AG04450 (cell line): ENCODE measurements at regions of chr6 and their contacts with region 1.

Region 1: DNA sequence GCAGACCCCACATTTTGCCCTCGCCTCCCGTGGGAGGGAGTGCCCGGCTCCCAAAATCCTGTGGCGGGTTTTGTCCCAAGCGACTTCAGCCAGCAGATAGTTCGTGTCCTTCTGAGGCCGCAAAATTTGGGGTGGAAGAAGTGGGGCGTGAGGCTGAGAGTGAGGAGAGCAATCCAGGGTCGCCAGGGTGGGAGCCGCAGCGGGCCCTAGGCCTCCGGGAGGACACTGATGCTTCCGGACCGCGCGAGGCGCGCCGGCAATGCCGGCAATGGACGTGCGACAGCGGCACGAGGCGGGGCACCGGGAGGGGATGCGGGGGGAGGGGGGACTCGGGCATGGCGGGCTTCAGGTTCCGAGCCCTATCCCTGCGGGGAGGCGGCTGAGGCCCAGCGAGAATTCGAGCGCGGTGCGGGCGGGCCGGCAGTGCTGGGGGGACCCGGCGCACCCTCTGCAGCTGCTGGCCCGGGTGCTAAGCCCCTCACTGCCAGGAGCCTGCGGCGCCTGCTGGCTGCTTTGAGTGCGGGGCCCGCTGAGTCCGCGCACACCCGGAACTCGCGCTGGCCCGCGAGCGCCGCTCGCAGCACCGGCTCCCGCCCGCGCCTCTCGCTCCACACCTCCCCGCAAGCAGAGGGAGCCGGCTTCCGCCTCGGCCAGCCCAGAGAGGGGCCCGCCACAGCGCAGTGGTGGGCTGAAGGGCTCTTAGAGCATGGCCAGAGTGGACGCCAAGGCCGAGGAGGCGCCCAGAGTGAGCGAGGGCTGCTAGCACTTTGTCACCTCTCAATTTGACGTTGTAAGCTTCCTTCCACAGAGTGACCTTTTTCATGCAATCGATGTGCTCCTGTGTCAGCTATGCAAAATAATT is 143.8 kb downstream of the LPA start:
- DNase-seq: peak; percentile 20
- H3K4me3 ChIP-seq: peak overlapping the region; percentile 71
- H3K27ac ChIP-seq: no peak overlapping the region
- H3K27me3 ChIP-seq: no peaks in the 10 kb centered on the region
- CTCF ChIP-seq: no peak

Region 2: GRCh38 chr6:160137989-160138835 is 382.1 kb before region 1 on chr6:
- CTCF ChIA-PET with region 1: interaction called, 10 read pairs
- POLR2A ChIA-PET with region 1: no interaction called
- DNase-seq: peak; percentile 27
- H3K4me3 ChIP-seq: no peak overlapping the region
- H3K27ac ChIP-seq: no peak overlapping the region
- H3K27me3 ChIP-seq: no peaks in the 10 kb centered on the region
- CTCF ChIP-seq: peak; percentile 76

Region 3: GRCh38 chr6:160439751-160440150 is 80.5 kb before region 1 on chr6:
- CTCF ChIA-PET with region 1: no interaction called
- POLR2A ChIA-PET with region 1: no interaction called
- DNase-seq: no peak
- H3K4me3 ChIP-seq: no peak overlapping the region
- H3K27ac ChIP-seq: no peak overlapping the region
- H3K27me3 ChIP-seq: peaks cover 6% of the 10 kb centered on the region
- CTCF ChIP-seq: no peak

Region 4: DNA sequence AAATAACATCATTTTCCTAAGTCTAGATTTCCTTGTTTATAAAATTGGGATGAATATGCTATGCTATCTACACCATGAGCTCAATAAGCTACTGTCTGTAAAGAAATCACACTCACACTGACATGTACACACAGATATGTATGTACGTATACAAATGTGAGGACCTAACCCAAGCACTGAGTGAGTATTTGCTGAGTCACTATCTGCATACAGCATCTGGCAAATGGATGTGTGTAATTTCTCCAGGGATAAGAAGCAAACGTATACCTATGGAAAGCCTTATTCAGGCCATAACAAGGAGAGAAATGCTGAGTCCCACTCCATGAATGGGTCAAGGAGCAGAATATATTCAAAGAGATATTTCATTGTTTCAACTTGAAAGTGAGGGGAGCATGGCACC is 10.1 kb before region 1 on chr6:
- CTCF ChIA-PET with region 1: interaction called, 57 read pairs
- POLR2A ChIA-PET with region 1: no interaction called
- DNase-seq: peak; percentile 29
- H3K4me3 ChIP-seq: no peak overlapping the region
- H3K27ac ChIP-seq: no peak overlapping the region
- H3K27me3 ChIP-seq: no peaks in the 10 kb centered on the region
- CTCF ChIP-seq: no peak

Region 5: DNA sequence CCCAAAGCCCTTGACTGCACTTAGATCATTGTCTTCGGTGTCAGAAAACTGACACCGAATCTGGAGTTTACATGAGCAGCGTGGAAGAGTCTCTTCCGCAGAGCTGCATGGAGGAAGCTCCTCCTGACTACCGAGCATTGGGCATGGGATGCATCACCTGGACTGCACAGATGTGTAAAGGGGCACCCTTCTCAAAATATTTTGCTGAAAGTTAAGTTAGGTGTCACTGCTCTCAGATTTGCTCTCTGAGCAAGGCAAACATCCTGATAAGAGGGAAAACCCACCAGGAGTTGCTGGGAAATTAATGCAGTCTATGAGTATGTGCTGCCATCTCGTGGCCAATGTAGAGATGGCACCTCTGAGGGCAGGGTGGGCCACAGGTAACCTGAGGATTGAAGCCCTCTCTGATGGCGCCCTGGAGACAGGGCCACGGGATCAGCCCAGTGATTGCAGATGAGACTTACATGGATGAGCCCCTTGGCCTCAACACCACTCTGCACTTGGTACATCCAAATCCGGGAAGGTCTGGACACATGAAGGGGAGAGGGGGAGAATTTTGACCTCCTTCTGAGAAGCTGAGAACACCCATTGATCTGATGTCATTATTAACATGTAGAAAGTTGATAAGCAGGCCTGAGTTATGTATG is 13.9 kb after region 1 on chr6:
- CTCF ChIA-PET with region 1: interaction called, 89 read pairs
- POLR2A ChIA-PET with region 1: no interaction called
- DNase-seq: no peak
- H3K4me3 ChIP-seq: no peak overlapping the region
- H3K27ac ChIP-seq: no peak overlapping the region
- H3K27me3 ChIP-seq: no peaks in the 10 kb centered on the region
- CTCF ChIP-seq: peak; percentile 89

Region 6: DNA sequence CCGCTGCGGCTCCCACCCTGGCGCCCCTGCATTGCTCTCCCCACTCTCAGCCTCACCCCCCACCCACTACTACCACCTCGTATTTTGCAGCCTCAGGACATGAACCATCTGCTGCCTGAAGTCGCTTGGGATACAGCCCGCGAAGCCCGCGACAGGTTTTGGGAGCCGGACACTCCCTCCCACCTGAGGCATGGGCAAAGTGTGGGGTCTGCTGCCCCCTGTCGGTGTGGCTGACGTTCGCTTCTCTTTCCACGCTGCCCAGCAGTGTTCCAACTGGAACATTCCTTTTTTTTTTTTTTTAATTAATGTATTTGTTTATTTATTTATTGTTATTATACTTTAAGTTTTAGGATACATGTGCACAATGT is 159.1 kb after region 1 on chr6:
- CTCF ChIA-PET with region 1: no interaction called
- POLR2A ChIA-PET with region 1: no interaction called
- DNase-seq: no peak
- H3K4me3 ChIP-seq: no peak overlapping the region
- H3K27ac ChIP-seq: no peak overlapping the region
- H3K27me3 ChIP-seq: no peaks in the 10 kb centered on the region
- CTCF ChIP-seq: no peak

Region 7: DNA sequence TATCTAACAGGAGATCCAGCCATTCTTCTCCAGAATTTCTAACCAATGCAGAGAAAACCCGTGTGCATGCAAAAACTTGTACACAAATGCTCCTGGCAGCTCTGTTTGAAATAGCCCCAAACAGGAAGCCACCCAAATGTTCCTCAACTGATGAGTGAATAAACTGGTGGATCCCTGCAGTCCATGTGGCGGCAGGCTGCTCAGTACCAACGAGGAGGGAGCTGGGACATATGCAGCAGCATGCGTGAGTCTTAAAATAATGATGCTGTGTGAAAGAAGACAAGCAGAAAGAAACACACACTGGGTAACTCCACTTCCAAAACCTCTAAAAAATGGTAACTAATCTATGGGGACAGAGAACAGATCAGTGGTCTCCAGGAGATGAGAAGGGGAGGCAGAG is 1295.7 kb after region 1 on chr6:
- CTCF ChIA-PET with region 1: no interaction called
- POLR2A ChIA-PET with region 1: no interaction called
- DNase-seq: no peak
- H3K4me3 ChIP-seq: no peak overlapping the region
- H3K27ac ChIP-seq: no peak overlapping the region
- H3K27me3 ChIP-seq: no peaks in the 10 kb centered on the region
- CTCF ChIP-seq: no peak